Dendritic cell treated with granulocyte-macrophage colony-stimulating factor and Interleukin-4, amounts not matched to agents 40 ng/mL and 50 ng/mL, for 4 days (primary cell): ENCODE measurements at regions of chr16 and their contacts with region 1.

Region 1: GRCh38 chr16:55842369-55843104 is 9.6 kb upstream of the CES1 start:
- H3K4me3 Mint-ChIP-seq: no peak overlapping the region
- H3K27ac Mint-ChIP-seq: no peak overlapping the region
- H3K4me1 Mint-ChIP-seq: peaks cover 25% of the 10 kb centered on the region
- H3K27me3 Mint-ChIP-seq: peaks cover 12% of the 10 kb centered on the region

Region 2: GRCh38 chr16:55711959-55712876 is 130.3 kb before region 1 on chr16:
- intact Hi-C with region 1: loop called (anchors 1 kb)
- H3K4me3 Mint-ChIP-seq: no peak overlapping the region
- H3K27ac Mint-ChIP-seq: no peak overlapping the region
- H3K4me1 Mint-ChIP-seq: no peaks in the 10 kb centered on the region
- H3K27me3 Mint-ChIP-seq: peaks cover 9% of the 10 kb centered on the region